AG04450 (cell line): ENCODE measurements at regions of chr4 and their contacts with region 1.

Region 1: DNA sequence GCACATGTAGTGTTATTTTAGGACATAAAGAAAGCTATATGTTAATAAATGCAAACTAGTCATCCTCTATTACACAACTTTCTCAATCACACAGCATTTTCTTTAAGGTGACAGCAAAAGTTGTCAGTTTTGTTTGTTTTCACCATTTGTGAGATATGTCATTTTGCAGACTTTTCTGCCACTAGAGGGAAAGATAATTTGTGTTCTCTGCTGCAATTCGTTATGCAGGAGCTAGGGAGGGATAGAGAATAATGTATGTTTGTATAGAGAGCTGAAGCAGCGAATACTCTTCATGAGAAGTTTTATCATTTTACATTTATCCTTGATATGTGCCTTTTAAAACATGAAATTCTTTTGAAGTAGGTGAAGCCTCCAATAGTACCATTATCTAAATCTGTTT is 670.6 kb upstream of the ATOH1 start:
- DNase-seq: no peak
- H3K4me3 ChIP-seq: no peak overlapping the region
- H3K27ac ChIP-seq: no peak overlapping the region
- H3K27me3 ChIP-seq: no peaks in the 10 kb centered on the region
- CTCF ChIP-seq: peak; percentile 55

Region 2: GRCh38 chr4:93061826-93062225 is 96.2 kb before region 1 on chr4:
- CTCF ChIA-PET with region 1: no interaction called
- POLR2A ChIA-PET with region 1: no interaction called
- DNase-seq: no peak
- H3K4me3 ChIP-seq: no peak overlapping the region
- H3K27ac ChIP-seq: no peak overlapping the region
- H3K27me3 ChIP-seq: no peaks in the 10 kb centered on the region
- CTCF ChIP-seq: no peak

Region 3: DNA sequence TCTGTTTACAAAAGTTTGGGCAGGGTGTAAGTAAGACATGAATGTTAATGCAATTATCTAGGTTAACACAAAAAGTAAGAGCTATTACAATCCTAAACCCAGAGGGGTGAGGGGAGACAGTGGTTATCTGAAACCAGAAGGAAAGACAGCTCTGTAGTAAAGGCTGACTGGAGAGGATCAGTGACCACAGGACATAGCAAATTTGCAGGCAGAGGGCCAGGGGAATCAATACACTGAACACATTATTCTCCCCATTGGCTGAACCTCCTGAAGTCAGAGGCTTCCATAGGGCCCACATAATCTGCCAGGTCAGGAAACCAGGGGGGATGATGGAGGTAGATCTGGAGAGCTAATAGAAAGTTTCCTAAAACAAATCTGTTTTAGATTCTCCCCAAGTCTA is 18.9 kb before region 1 on chr4:
- CTCF ChIA-PET with region 1: no interaction called
- POLR2A ChIA-PET with region 1: no interaction called
- DNase-seq: no peak
- H3K4me3 ChIP-seq: no peak overlapping the region
- H3K27ac ChIP-seq: no peak overlapping the region
- H3K27me3 ChIP-seq: no peaks in the 10 kb centered on the region
- CTCF ChIP-seq: no peak

Region 4: GRCh38 chr4:93764639-93765246 is 606.7 kb after region 1 on chr4:
- CTCF ChIA-PET with region 1: interaction called, 23 read pairs
- POLR2A ChIA-PET with region 1: no interaction called
- DNase-seq: peak; percentile 20
- H3K4me3 ChIP-seq: no peak overlapping the region
- H3K27ac ChIP-seq: no peak overlapping the region
- H3K27me3 ChIP-seq: peaks cover 3% of the 10 kb centered on the region
- CTCF ChIP-seq: peak; percentile 86